CD4-positive, alpha-beta T cell (primary cell): ENCODE measurements at regions of chr10 and their contacts with region 1.

Region 1: GRCh38 chr10:11440250-11441150 is 170.9 kb downstream of the USP6NL start:
- DNase-seq: peak in 2 of 14 experiments; percentile 8 to 9
- ATAC-seq: peak; percentile 57
- H3K4me3 ChIP-seq: peak overlapping the region; percentile 40
- H3K4me3 Mint-ChIP-seq: peak overlapping the region; percentile 80
- H3K27ac ChIP-seq: no peak overlapping the region
- H3K27ac Mint-ChIP-seq: no peak overlapping the region
- H3K4me1 ChIP-seq: peaks cover 11% of the 10 kb centered on the region
- H3K4me1 Mint-ChIP-seq: peaks cover 21% of the 10 kb centered on the region
- H3K27me3 ChIP-seq: no peaks in the 10 kb centered on the region
- H3K27me3 Mint-ChIP-seq: no peaks in the 10 kb centered on the region
- CTCF ChIP-seq: no peak

Region 2: GRCh38 chr10:11359869-11360268 is 80.6 kb before region 1 on chr10:
- CTCF ChIA-PET with region 1: no interaction called
- POLR2A ChIA-PET with region 1: no interaction called
- intact Hi-C with region 1: loop called in 1 of 2 experiments (anchors 5 kb)
- DNase-seq: no peak
- ATAC-seq: no peak
- H3K4me3 ChIP-seq: no peak overlapping the region
- H3K4me3 Mint-ChIP-seq: no peak overlapping the region
- H3K27ac ChIP-seq: no peak overlapping the region
- H3K27ac Mint-ChIP-seq: no peak overlapping the region
- H3K4me1 ChIP-seq: no peaks in the 10 kb centered on the region
- H3K4me1 Mint-ChIP-seq: no peaks in the 10 kb centered on the region
- H3K27me3 ChIP-seq: no peaks in the 10 kb centered on the region
- H3K27me3 Mint-ChIP-seq: no peaks in the 10 kb centered on the region
- CTCF ChIP-seq: no peak

Region 3: GRCh38 chr10:11468126-11468742 is 27.7 kb after region 1 on chr10:
- CTCF ChIA-PET with region 1: no interaction called
- POLR2A ChIA-PET with region 1: no interaction called
- intact Hi-C with region 1: no loop called
- DNase-seq: no peak
- ATAC-seq: no peak
- H3K4me3 ChIP-seq: no peak overlapping the region
- H3K4me3 Mint-ChIP-seq: no peak overlapping the region
- H3K27ac ChIP-seq: no peak overlapping the region
- H3K27ac Mint-ChIP-seq: no peak overlapping the region
- H3K4me1 ChIP-seq: peaks cover 3% of the 10 kb centered on the region
- H3K4me1 Mint-ChIP-seq: peaks cover 5% of the 10 kb centered on the region
- H3K27me3 ChIP-seq: no peaks in the 10 kb centered on the region
- H3K27me3 Mint-ChIP-seq: no peaks in the 10 kb centered on the region
- CTCF ChIP-seq: no peak